PC-9 (cell line): ENCODE measurements at regions of chr14 and their contacts with region 1.

Region 1: DNA sequence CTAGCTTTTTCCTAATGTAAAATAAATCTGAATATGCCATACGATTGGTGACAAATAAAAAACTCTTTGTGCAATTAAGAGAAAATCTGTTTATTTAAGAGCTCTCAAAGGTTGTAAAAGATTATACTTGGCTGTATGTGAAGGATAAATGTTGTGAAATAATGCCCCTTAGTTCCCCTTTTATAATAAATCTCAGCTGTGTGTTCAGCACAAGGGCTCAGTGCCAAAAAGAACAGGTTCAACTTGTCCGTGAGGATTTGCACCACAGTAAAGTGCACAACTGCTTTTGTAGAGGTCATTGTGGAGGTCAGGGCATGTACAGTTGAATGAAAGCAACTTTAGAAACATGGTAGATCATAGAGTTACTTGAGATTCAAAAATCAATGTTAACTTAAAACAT is 118.6 kb downstream of the TRMT5 start:
- DNase-seq: peak; percentile 72 to 84
- H3K4me3 ChIP-seq: peak overlapping the region; percentile 4; the same call in 1 of the 2 replicates
- H3K27ac ChIP-seq: peak overlapping the region; percentile 49
- H3K4me1 ChIP-seq: peaks cover 32% of the 10 kb centered on the region
- H3K27me3 ChIP-seq: no peaks in the 10 kb centered on the region
- CTCF ChIP-seq: no peak

Region 2: DNA sequence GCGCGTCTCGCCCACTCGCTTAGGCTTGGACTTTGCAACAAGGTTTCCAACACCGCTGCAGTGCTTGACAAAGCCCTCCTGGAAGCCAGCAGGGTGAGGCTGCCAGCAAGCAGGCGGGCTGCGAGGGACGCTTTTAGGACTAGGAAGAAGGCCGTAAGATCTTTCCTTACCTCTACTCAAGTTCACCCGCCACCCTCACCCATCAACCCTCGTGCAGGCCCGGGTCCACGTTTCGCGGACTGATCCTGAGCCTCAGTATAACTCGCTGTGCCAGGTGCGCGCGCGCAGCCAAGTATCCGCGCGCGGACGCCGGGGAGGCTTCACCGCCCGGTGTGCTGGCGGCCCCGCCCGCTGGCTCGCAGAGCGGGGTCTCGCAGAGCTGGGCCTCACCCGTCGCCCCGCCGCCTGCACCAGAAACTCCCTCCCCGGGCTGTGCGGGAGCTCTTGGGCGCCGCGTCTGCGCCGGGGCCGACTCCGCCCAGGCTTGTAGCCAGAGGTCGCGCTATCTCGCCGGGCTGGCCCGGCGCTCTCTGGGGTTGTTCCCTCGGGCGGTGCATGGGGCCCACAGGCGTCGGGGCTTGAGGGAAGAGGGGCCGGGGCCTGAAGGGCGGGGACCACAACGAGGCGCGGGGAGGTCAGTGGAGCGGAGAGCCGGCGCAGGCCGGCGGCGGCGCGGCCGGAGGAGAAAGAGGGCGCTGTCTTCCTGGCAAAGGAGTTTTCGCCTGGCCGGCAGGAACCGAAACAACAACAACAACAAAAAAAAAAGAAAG is 205.4 kb before region 1 on chr14:
- CTCF ChIA-PET with region 1: no interaction called
- POLR2A ChIA-PET with region 1: no interaction called
- intact Hi-C with region 1: loop called (anchors 10 kb)
- DNase-seq: peak in 1 of 2 experiments; percentile 80
- H3K4me3 ChIP-seq: peak overlapping the region; percentile 63
- H3K27ac ChIP-seq: no peak overlapping the region
- H3K4me1 ChIP-seq: 0 out of 2 replicates have a peak, but pooled peaks cover 6% of the 10 kb centered on the region
- H3K27me3 ChIP-seq: no peaks in the 10 kb centered on the region
- CTCF ChIP-seq: peak; percentile 64

Region 3: GRCh38 chr14:60819575-60819974 is 42.7 kb before region 1 on chr14:
- CTCF ChIA-PET with region 1: no interaction called
- POLR2A ChIA-PET with region 1: no interaction called
- intact Hi-C with region 1: no loop called
- DNase-seq: no peak
- H3K4me3 ChIP-seq: no peak overlapping the region
- H3K27ac ChIP-seq: no peak overlapping the region
- H3K4me1 ChIP-seq: no peaks in the 10 kb centered on the region
- H3K27me3 ChIP-seq: no peaks in the 10 kb centered on the region
- CTCF ChIP-seq: no peak

Region 4: GRCh38 chr14:60884134-60884533 is 21.8 kb after region 1 on chr14:
- CTCF ChIA-PET with region 1: no interaction called
- POLR2A ChIA-PET with region 1: interaction called, 42 read pairs
- intact Hi-C with region 1: no loop called
- DNase-seq: no peak
- H3K4me3 ChIP-seq: no peak overlapping the region
- H3K27ac ChIP-seq: no peak overlapping the region
- H3K4me1 ChIP-seq: no peaks in the 10 kb centered on the region
- H3K27me3 ChIP-seq: no peaks in the 10 kb centered on the region
- CTCF ChIP-seq: no peak

Region 5: GRCh38 chr14:61043506-61043905 is 181.2 kb after region 1 on chr14:
- CTCF ChIA-PET with region 1: interaction called, 10 read pairs
- POLR2A ChIA-PET with region 1: no interaction called
- intact Hi-C with region 1: no loop called
- DNase-seq: no peak
- H3K4me3 ChIP-seq: no peak overlapping the region
- H3K27ac ChIP-seq: no peak overlapping the region
- H3K4me1 ChIP-seq: no peaks in the 10 kb centered on the region
- H3K27me3 ChIP-seq: no peaks in the 10 kb centered on the region
- CTCF ChIP-seq: no peak